ENCODE measurements at regions of chr7 and their contacts with region 1.

Region 1: DNA sequence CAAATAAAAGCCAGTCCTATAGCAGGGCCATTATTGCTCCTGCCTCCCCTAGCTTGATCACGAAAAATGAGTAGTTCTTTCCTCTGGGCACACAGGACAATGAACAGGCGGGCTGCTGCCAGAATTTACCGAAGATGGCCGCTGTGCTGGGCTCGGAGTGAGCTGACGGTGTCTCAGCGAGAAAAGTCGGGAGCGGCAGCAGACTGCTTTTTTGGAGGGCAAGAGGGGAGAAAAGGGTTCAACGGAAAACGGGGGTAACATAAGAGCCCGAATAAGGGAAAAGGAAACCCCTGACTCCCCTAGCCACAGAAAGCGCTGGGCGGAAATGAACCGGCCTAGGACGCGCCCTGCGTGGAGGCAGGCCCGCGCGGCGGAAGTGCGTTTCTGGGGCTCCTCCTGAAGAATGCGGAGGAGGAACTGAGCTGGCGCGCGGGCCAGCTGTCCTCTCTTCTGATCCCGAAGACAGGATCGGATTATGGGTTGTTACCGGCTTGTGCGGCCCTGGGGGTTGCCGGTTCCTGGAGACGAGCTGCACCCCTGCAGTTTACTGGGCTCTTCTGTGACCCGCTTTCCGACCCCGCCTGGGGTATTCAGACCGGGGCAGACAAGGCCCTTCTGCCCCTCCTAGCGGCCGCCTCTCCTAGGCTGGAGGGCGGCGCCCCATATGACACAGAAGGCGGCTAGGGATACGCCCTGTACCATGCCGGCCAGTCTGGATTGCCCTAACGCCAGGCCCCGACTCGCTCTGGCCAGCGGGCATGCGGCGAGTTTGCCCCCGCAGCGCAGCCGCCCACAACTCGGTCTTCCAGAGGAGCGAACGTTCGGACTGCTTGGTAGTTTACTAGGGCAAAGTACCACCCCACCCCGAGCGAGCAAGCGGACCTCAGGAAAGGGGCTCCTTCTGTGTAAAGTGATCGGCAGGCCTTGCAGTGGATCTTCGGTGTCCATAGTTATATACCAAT is 30.1 kb upstream of the KMT2E start:
- DNase-seq: peak; percentile 79 to 98 (median 88)

Region 2: DNA sequence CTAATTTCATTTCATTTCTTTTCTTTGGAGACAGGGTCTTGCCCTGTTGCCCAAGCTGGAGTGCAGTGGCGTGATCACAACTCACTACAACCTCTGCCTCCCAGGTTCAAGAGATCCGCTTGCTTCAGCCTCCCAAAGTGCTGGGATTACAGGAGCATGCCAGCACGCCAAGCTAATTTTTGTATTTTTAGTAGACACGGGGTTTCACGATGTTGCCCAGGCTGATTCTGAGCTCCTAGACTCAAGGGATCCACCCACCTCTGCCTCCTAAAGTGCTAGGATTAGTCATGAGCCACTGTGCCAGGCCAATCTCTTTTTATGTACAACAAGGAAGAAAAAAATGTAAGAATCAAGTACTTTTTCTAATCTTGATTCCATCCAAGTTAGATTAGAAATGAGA is 19.4 kb after region 1 on chr7:
- intact Hi-C with region 1: loop called (anchors 2 kb)
- DNase-seq: peak in 5 of 10 donors; percentile 26 to 80 (median 29)

Region 3: DNA sequence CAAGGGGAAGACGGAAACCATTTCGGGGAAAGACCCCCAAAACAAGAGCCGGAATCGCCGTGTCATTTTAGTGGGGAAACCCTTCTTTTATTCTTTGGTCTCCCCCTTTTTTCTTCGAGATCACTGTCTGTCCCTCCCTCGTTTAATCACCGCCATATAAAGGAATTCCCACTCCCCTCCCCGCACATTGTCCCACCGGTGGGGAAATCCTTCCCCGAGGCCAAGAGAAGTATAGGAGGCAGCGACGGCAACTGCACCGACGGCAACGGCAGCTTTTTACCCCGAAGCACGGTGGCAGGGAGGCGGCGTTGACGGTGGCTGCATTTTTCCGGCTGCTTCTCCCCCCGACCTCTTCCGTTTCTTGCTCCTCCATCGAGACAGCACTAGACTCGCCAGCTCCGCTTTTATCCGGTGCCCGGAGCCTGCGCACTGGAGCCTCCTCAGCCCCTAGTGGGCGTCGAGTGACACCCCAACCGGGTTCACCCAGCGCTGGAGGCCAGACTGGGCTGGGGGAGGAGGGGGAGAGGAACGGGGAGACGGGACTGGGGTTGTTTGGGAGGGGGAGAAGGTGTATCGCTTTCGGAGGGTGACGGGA is 29.5 kb after region 1 on chr7:
- intact Hi-C with region 1: loop called (anchors 1 kb)
- DNase-seq: peak; percentile 95 to 99 (median 97)

Region 4: GRCh38 chr7:105336009-105336408 is 352.1 kb after region 1 on chr7:
- intact Hi-C with region 1: loop called (anchors 10 kb)
- DNase-seq: no peak

Region 5: DNA sequence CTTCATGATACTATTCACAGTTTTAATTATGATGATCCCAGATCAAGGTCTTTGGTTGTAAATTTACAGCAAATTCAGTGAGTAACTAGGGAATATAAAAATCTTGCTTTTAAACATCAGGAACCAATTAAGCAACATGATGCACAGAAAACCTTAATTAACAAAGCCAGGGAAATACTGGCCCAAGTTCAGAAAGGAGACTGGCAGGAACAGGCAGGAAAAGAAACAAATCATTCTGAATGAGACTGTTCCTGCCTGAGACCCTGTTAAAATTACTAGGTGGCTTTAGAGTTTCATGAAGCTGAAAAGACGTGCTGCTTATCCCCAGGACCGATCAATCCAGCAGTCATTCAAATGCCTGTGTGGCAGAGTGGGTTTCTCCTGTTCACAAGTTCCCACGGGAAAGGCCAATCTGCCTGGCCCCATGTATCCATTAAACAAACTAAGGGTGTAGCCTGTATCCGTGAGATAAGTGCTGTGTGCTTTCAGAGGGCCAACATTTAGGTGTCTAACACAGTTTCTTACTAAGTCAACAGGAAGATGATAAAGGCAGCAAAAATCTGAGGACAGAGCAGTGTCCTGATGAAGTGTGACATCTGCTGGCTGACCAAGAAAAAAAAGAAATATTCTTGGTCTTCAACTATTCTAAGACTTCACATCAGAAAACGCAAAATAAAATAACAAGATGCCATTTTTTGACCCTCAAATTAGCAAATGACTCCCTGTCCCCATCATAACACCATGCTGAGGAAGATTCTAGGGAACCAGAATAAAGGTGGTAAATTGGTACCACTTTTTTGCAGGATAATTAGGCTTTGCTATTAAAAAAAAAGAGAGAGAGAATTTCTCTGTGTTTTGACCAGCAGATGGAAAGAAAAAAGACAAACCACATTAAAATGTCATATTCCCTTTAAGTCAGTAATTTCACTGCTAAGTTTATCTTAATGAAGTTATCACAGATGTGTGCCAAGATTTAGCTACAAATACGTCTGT is 504.0 kb after region 1 on chr7:
- intact Hi-C with region 1: loop called (anchors 5 kb)
- DNase-seq: peak in 2 of 10 donors; percentile 15 to 27

Measured in posterior cingulate gyrus (tissue), 11 donors.